ENCODE measurements at regions of chr11 and their contacts with region 1.

Region 1: GRCh38 chr11:14300661-14301304 is 58.2 kb downstream of the RRAS2 start:
- DNase-seq: peak; percentile 66 to 69
- H3K4me3 ChIP-seq: no peak overlapping the region
- H3K4me3 Mint-ChIP-seq: no peak overlapping the region
- H3K27ac Mint-ChIP-seq: no peak overlapping the region
- H3K4me1 ChIP-seq: no peaks in the 10 kb centered on the region
- H3K4me1 Mint-ChIP-seq: no peaks in the 10 kb centered on the region
- H3K27me3 ChIP-seq: no peaks in the 10 kb centered on the region
- H3K27me3 Mint-ChIP-seq: no peaks in the 10 kb centered on the region
- CTCF ChIP-seq: peak; percentile 78 to 89

Region 2: GRCh38 chr11:14418803-14419417 is 118.1 kb after region 1 on chr11:
- CTCF ChIA-PET with region 1: interaction called, 63 read pairs
- POLR2A ChIA-PET with region 1: no interaction called
- intact Hi-C with region 1: loop called (anchors 1 kb)
- DNase-seq: peak in 1 of 2 experiments; percentile 44
- H3K4me3 ChIP-seq: no peak overlapping the region
- H3K4me3 Mint-ChIP-seq: no peak overlapping the region
- H3K27ac Mint-ChIP-seq: no peak overlapping the region
- H3K4me1 ChIP-seq: peaks cover 22% of the 10 kb centered on the region
- H3K4me1 Mint-ChIP-seq: no peaks in the 10 kb centered on the region
- H3K27me3 ChIP-seq: no peaks in the 10 kb centered on the region
- H3K27me3 Mint-ChIP-seq: no peaks in the 10 kb centered on the region
- CTCF ChIP-seq: peak; percentile 37 to 66

Region 3: DNA sequence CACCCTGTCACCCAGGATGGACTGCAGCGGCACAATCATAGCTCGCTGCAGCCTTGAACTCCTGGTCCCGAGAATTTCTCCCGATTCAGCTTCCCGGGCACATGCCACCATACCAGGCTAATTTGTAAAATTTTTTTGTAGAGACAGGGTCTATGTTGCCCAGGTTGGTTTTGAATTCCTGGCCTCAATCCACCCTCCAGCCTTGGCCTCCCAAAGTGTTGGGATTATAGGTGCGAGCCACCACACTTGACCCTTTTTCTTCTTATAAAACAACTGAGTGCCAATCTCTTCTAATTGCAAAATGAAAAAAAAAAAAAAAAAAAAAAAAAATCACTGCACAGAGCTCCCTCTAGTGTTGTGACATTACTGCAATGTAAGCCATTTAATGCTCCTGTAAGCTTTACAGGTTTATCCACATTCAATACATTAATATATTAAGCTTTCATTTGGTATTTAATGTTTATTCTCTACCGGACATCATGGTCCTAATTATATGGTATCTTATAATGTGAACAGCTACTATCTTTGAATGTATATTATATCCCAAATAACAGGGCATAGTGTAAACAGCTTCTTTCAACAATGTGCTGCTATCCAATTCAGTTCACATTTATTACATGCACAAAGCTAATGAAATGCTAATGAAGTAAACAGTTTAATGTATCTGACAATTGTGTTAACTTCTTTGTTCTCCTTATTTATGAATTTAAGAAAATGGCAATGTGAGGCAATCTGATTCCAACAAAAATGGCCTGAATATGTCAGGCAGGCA is 154.3 kb after region 1 on chr11:
- CTCF ChIA-PET with region 1: interaction called, 40 read pairs
- POLR2A ChIA-PET with region 1: interaction called, 3 read pairs
- intact Hi-C with region 1: loop called (anchors 1 kb)
- DNase-seq: no peak
- H3K4me3 ChIP-seq: no peak overlapping the region
- H3K4me3 Mint-ChIP-seq: no peak overlapping the region
- H3K27ac Mint-ChIP-seq: no peak overlapping the region
- H3K4me1 ChIP-seq: no peaks in the 10 kb centered on the region
- H3K4me1 Mint-ChIP-seq: no peaks in the 10 kb centered on the region
- H3K27me3 ChIP-seq: no peaks in the 10 kb centered on the region
- H3K27me3 Mint-ChIP-seq: no peaks in the 10 kb centered on the region
- CTCF ChIP-seq: peak; percentile 66 to 75

Region 4: DNA sequence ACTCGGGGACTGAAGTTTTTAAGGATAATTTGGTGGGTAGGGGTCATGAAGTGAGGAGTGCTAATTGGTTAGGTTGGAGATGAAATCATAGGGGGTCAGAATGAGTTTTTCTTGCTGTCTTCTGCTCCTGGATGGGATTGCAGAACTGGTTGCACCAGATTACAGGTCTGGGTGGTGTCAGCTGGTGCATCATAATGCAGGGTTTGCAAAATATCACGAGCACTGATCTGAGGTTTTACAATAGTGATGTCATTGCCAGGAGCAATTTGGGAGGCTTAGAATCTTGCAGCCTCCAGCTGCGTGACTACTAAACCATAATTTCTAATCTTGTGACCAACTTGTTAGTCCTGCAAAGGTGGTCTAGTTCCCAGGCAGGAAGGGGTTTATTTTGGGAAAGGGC is 726.2 kb after region 1 on chr11:
- CTCF ChIA-PET with region 1: no interaction called
- POLR2A ChIA-PET with region 1: no interaction called
- intact Hi-C with region 1: no loop called
- DNase-seq: no peak
- H3K4me3 ChIP-seq: no peak overlapping the region
- H3K4me3 Mint-ChIP-seq: no peak overlapping the region
- H3K27ac Mint-ChIP-seq: no peak overlapping the region
- H3K4me1 ChIP-seq: no peaks in the 10 kb centered on the region
- H3K4me1 Mint-ChIP-seq: no peaks in the 10 kb centered on the region
- H3K27me3 ChIP-seq: no peaks in the 10 kb centered on the region
- H3K27me3 Mint-ChIP-seq: peaks cover 17% of the 10 kb centered on the region
- CTCF ChIP-seq: no peak

Region 5: DNA sequence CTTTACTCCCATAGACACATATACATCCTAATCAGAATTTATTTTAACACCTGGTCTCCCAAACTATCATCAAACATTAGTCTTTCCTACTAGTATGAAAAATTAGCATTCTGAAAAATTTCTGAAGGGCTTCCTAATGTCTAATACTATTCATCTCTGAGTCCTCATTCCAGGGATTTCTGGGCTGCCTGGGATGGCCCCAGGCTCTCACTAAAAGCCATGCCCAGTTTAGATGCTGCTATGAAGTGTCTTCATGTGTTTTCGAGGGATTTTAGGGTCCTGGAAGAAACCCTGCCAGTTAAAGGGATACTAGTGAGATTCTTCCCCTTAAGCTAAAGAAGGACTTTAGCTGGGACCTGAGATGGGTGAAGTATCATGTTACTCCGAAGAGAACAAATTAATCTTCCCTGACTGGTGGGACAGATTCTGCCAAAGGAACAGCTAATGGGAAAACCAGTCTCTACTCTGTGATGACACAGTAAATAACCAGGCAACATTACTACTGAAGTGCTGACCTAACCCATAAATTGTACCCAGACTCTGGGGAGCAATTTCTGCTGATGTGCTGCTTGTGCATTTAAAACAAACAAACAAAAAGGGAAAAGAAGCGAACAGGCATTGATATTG is 1713.0 kb after region 1 on chr11:
- CTCF ChIA-PET with region 1: no interaction called
- POLR2A ChIA-PET with region 1: no interaction called
- intact Hi-C with region 1: no loop called
- DNase-seq: no peak
- H3K4me3 ChIP-seq: no peak overlapping the region
- H3K4me3 Mint-ChIP-seq: no peak overlapping the region
- H3K27ac Mint-ChIP-seq: no peak overlapping the region
- H3K4me1 ChIP-seq: no peaks in the 10 kb centered on the region
- H3K4me1 Mint-ChIP-seq: no peaks in the 10 kb centered on the region
- H3K27me3 ChIP-seq: no peaks in the 10 kb centered on the region
- H3K27me3 Mint-ChIP-seq: no peaks in the 10 kb centered on the region
- CTCF ChIP-seq: no peak